ENCODE measurements at regions of chr19 and their contacts with region 1.

Region 1: DNA sequence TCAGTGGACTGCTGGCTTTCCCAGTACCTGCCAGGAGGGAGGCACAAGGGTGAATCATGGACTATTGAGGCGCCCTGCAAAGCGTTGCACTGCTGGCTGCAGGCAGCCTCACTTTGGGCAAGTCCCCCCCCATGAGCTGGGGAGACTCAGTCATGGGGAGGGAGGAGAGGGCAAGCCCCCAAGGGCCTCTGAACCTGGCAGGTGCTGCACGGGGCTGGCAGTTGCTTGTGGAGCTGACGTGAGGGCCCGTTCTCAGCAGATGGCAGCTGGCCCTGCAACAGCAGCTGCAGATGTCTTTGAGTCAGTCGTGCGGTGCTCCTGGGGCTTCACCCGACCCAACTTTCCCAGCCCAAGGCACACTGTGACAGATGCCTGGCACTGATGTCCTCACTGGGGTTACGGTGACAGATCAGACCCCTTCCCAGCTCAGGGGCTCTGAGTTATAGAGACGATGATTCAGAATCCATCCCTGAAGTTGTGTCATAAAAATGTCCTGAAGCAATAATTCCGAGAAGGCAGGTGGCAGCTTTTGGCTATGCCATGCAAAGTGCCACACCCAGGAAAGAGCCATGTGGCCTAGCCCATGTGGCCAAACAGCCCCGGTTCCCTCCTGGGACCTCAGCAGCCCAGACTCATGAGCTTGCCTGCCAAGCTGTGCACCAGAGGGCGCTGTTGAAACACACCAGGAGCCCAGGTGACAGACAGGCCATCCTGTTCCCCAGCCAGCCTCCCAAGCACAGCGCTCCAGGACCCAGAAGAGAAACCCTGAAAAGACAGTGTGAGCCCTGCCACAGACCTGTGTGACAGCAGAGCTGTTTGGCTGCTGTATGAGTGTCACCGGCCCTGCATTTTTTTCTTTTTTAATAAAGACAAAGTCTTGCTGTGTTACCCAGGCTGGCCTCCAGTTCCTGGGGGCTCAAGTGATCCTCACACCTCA is 53.6 kb upstream of the LDLR start:
- DNase-seq: peak; percentile 78 to 84 (median 81)
- H3K4me3 ChIP-seq: no peak overlapping the region
- H3K4me3 Mint-ChIP-seq: peak overlapping the region in 1 of 8 donors; percentile 18
- H3K27ac ChIP-seq: no peak overlapping the region
- H3K27ac Mint-ChIP-seq: peak overlapping the region in 5 of 7 donors; percentile 52 to 85 (median 65)
- H3K4me1 ChIP-seq: no peaks in the 10 kb centered on the region
- H3K4me1 Mint-ChIP-seq: peaks cover 4 to 21% (median 7%) of the 10 kb centered on the region in 4 donors
- H3K27me3 ChIP-seq: no peaks in the 10 kb centered on the region
- H3K27me3 Mint-ChIP-seq: no peaks in the 10 kb centered on the region

Region 2: GRCh38 chr19:10812902-10813404 is 222.8 kb before region 1 on chr19:
- CTCF ChIA-PET with region 1: no interaction called
- POLR2A ChIA-PET with region 1: no interaction called
- intact Hi-C with region 1: no loop called
- DNase-seq: no peak
- H3K4me3 ChIP-seq: no peak overlapping the region
- H3K4me3 Mint-ChIP-seq: no peak overlapping the region
- H3K27ac ChIP-seq: no peak overlapping the region
- H3K27ac Mint-ChIP-seq: peak overlapping the region; percentile 25 to 84 (median 68)
- H3K4me1 ChIP-seq: peaks cover 17% of the 10 kb centered on the region
- H3K4me1 Mint-ChIP-seq: peaks cover 15 to 30% (median 23%) of the 10 kb centered on the region in 4 donors
- H3K27me3 ChIP-seq: no peaks in the 10 kb centered on the region
- H3K27me3 Mint-ChIP-seq: no peaks in the 10 kb centered on the region

Region 3: DNA sequence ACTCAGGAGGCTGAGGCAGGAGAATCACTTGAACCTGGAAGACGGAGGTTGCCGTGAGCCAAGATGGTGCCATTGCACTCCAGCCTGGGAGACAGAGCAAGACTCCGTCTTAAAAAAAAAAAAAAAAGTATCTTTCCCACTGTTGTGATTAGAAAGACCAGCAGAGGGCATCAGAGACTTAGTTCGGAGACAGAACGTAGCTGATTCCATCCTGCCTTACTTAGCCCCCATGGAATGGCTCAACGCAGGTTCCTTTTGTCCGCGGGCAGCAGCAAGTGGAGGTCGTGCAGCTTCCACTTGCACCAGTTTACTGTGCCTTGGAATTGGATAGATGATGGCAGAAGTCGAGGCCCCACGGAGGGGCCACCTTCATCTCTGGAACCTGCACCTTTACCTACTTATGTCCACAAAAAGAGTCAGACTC is 99.0 kb before region 1 on chr19:
- CTCF ChIA-PET with region 1: interaction called, 14 read pairs
- POLR2A ChIA-PET with region 1: interaction called, 3 read pairs
- intact Hi-C with region 1: loop called (anchors 10 kb)
- DNase-seq: peak in 4 of 5 donors; percentile 53 to 63 (median 59)
- H3K4me3 ChIP-seq: no peak overlapping the region
- H3K4me3 Mint-ChIP-seq: peak overlapping the region in 1 of 8 donors; percentile 36
- H3K27ac ChIP-seq: no peak overlapping the region
- H3K27ac Mint-ChIP-seq: peak overlapping the region in 3 of 7 donors; percentile 48 to 82 (median 60)
- H3K4me1 ChIP-seq: peaks cover 10% of the 10 kb centered on the region
- H3K4me1 Mint-ChIP-seq: peaks cover 5 to 10% (median 8%) of the 10 kb centered on the region in 4 donors
- H3K27me3 ChIP-seq: no peaks in the 10 kb centered on the region
- H3K27me3 Mint-ChIP-seq: no peaks in the 10 kb centered on the region

Region 4: GRCh38 chr19:11064831-11065303 is 29.2 kb after region 1 on chr19:
- CTCF ChIA-PET with region 1: interaction called, 12 read pairs
- POLR2A ChIA-PET with region 1: no interaction called
- intact Hi-C with region 1: no loop called
- DNase-seq: no peak
- H3K4me3 ChIP-seq: no peak overlapping the region
- H3K4me3 Mint-ChIP-seq: no peak overlapping the region
- H3K27ac ChIP-seq: no peak overlapping the region
- H3K27ac Mint-ChIP-seq: peak overlapping the region in 1 of 7 donors; percentile 59
- H3K4me1 ChIP-seq: no peaks in the 10 kb centered on the region
- H3K4me1 Mint-ChIP-seq: peaks cover 0 to 5% (median under 1%) of the 10 kb centered on the region in 4 donors
- H3K27me3 ChIP-seq: no peaks in the 10 kb centered on the region
- H3K27me3 Mint-ChIP-seq: no peaks in the 10 kb centered on the region

Region 5: DNA sequence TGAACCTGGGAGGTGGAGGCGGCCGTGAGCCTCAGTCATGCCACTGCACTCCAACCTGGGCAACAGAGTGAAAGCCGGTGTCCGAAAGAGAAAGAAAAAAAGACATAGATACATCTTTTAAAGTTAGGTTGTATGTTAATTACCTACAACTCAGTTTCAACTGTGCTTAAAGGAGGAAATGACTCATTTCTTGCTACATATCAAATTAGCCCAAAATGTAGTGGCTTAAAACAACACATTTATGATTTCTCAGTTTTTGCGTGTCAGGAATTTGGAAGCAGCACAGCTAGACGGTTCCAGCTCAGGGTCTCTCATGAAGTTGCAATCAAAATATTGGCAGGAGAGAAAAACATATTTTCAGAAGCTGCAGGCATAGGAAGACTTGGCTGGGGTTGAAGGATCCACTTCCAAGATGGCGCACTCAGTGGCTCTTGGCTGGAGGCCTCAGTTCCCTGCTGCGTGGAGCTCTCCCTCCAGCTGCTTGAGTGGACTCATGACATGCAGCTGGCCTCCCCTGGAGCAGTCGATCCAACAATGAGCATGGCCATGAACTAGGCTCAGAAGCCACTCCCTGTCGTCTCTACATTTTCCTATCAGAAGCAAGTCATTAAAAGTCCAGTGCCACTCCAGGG is 60.6 kb after region 1 on chr19:
- CTCF ChIA-PET with region 1: interaction called, 41 read pairs
- POLR2A ChIA-PET with region 1: interaction called, 36 read pairs
- intact Hi-C with region 1: loop called (anchors 1 kb)
- DNase-seq: peak; percentile 31 to 71 (median 38)
- H3K4me3 ChIP-seq: peak overlapping the region in 1 of 2 donors; percentile 32
- H3K4me3 Mint-ChIP-seq: peak overlapping the region; percentile 46 to 91 (median 76)
- H3K27ac ChIP-seq: peak overlapping the region; percentile 89
- H3K27ac Mint-ChIP-seq: peak overlapping the region; percentile 92 to 100 (median 97)
- H3K4me1 ChIP-seq: peaks cover 65% of the 10 kb centered on the region
- H3K4me1 Mint-ChIP-seq: peaks cover 31 to 62% (median 45%) of the 10 kb centered on the region in 4 donors
- H3K27me3 ChIP-seq: no peaks in the 10 kb centered on the region
- H3K27me3 Mint-ChIP-seq: no peaks in the 10 kb centered on the region

Region 6: DNA sequence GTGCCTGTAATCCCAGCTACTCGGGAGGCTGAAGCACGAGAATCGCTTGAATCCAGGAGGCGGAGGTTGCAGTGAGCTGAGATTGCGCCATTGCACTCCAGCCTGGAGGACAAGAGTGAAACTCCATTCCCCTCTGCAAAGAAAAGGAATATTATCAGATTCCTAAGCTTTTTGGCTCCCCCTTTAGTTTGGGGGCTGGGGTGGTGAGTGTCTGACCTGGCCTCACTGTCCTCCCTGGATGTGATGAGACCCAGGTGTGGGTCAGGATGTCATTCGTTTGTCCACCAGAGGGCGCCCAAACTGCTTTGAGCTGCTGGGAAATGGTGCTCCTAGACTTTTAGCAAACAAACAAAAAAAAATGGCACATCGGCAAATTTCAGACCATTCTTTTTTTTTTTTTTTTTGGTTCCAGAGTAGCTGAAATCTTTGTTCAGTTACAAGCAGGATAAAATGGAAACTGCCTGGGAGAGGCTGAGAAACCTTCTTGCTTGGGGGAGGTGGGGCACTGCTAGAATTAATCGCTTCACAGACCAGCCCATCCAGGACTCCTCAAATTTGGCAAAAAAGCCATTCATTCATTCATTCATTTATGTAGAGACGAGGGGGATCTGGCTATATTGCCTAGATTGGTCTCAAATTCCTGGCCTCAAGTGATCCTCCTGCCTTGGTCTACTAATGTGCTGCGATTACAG is 90.4 kb after region 1 on chr19:
- CTCF ChIA-PET with region 1: interaction called, 150 read pairs
- POLR2A ChIA-PET with region 1: interaction called, 20 read pairs
- intact Hi-C with region 1: loop called (anchors 1 kb)
- DNase-seq: peak; percentile 62 to 66 (median 65)
- H3K4me3 ChIP-seq: no peak overlapping the region
- H3K4me3 Mint-ChIP-seq: no peak overlapping the region
- H3K27ac ChIP-seq: no peak overlapping the region
- H3K27ac Mint-ChIP-seq: peak overlapping the region in 6 of 7 donors; percentile 46 to 82 (median 64)
- H3K4me1 ChIP-seq: no peaks in the 10 kb centered on the region
- H3K4me1 Mint-ChIP-seq: peaks cover 0 to 4% (median under 1%) of the 10 kb centered on the region in 4 donors
- H3K27me3 ChIP-seq: no peaks in the 10 kb centered on the region
- H3K27me3 Mint-ChIP-seq: no peaks in the 10 kb centered on the region

Region 7: DNA sequence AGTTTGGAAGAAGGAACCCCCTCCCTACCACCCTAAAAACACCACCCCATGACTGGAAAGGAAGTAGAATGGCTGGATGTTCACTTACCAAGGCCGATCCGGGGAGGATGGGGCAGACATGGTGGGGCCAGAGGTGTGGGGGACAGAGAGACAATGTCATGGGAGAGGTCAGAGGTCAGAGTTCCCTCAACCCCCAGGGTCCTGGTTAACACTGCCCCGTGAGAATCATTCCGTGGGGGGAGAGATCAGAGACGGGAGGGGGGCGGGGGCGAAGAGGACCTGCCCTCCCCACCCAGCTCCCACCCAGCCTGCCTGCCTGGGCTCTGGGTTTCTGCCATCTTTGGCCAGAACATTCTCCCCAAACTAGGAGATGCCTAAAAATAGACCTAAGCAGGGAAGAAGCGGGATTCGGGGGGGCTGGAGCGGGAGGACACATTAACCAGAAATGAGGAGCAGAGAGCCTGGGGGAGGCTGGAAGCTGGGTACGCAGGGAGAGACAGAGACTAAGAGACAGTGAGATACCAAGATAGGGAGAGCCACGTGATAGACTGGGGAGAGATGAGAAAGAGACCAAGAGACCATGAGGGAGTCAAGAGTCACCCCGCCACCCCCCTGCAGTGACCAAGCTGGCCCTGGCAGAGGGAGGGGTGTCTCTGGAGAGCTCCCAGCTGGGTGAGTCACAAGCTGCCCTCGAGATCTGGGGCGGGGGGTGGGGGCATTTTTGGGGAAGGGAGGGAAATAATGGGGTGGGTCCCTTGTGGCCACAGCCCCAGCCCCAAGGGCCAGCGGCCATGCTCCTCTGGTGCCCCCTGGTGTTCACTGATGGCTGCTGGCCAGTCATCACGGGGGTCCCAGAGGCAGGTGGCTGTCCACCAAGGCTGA is 167.7 kb after region 1 on chr19:
- CTCF ChIA-PET with region 1: interaction called, 24 read pairs
- POLR2A ChIA-PET with region 1: no interaction called
- intact Hi-C with region 1: loop called (anchors 1 kb)
- DNase-seq: peak in 1 of 5 donors; percentile 18
- H3K4me3 ChIP-seq: no peak overlapping the region
- H3K4me3 Mint-ChIP-seq: no peak overlapping the region
- H3K27ac ChIP-seq: no peak overlapping the region
- H3K27ac Mint-ChIP-seq: no peak overlapping the region
- H3K4me1 ChIP-seq: no peaks in the 10 kb centered on the region
- H3K4me1 Mint-ChIP-seq: peaks cover 0 to 1% (median 0%) of the 10 kb centered on the region in 4 donors
- H3K27me3 ChIP-seq: no peaks in the 10 kb centered on the region
- H3K27me3 Mint-ChIP-seq: no peaks in the 10 kb centered on the region